Heart left ventricle (tissue), 16 donors: ENCODE measurements at regions of chr4 and their contacts with region 1.

Region 1: DNA sequence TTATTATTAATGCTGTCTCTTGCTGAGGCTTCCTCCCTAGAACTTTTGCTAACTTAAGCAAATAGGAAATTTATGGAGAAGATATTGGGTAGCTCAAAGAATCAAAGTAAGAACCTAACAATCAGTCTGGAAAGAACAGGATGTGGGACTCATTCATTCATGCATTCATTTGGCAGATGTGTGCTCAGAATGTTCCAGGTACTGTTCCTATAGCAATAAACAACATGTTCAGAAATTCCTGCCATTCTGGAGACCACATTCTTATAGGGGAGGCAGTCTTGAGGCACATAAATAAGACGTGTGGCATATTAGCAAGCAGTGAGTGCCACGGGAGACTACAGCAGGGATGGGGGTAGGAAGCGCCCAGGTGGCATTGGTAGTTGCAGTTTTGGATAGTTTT is 5.0 kb downstream of the GRK4 start:
- DNase-seq: no peak
- ATAC-seq: no peak
- H3K4me3 ChIP-seq: no peak overlapping the region
- H3K27ac ChIP-seq: no peak overlapping the region
- H3K4me1 ChIP-seq: peaks cover 0 to 14% (median 8%) of the 10 kb centered on the region in 12 donors
- H3K27me3 ChIP-seq: no peaks in the 10 kb centered on the region
- CTCF ChIP-seq: no peak
- POLR2A ChIP-seq: no peak

Region 2: DNA sequence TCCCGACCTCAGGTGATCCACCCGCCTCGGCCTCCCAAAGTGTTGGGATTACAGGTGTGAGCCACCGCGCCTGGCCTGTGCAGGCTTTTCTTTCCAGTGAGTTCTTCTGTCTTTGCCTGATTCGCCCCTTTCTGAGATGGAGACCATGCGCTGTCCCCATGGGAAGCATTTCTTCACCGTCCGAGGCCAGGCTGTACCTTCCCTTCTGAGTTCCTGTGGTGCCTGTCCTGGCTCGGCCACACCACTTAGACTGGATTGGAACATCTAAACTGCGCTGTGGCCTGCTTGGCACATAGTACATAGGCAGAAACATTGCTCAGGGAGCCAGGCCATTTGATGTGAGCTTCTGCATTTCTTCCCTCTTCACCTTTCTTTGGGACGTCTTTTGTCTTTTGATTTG is 408.2 kb before region 1 on chr4:
- intact Hi-C with region 1: no loop called
- DNase-seq: no peak
- ATAC-seq: peak in 2 of 4 donors; percentile 29 to 35
- H3K4me3 ChIP-seq: no peak overlapping the region
- H3K27ac ChIP-seq: no peak overlapping the region
- H3K4me1 ChIP-seq: peaks cover 0 to 36% (median 7%) of the 10 kb centered on the region in 12 donors
- H3K27me3 ChIP-seq: no peaks in the 10 kb centered on the region
- CTCF ChIP-seq: no peak
- POLR2A ChIP-seq: no peak

Region 3: GRCh38 chr4:3031357-3032082 is 63.1 kb after region 1 on chr4:
- intact Hi-C with region 1: loop called in 4 of 10 experiments (anchors 5 kb)
- DNase-seq: peak in 1 of 5 donors; percentile 48
- ATAC-seq: peak in 2 of 4 donors; percentile 32 to 33
- H3K4me3 ChIP-seq: no peak overlapping the region
- H3K27ac ChIP-seq: no peak overlapping the region
- H3K4me1 ChIP-seq: no peaks in the 10 kb centered on the region
- H3K27me3 ChIP-seq: no peaks in the 10 kb centered on the region
- CTCF ChIP-seq: no peak
- POLR2A ChIP-seq: no peak

Region 4: DNA sequence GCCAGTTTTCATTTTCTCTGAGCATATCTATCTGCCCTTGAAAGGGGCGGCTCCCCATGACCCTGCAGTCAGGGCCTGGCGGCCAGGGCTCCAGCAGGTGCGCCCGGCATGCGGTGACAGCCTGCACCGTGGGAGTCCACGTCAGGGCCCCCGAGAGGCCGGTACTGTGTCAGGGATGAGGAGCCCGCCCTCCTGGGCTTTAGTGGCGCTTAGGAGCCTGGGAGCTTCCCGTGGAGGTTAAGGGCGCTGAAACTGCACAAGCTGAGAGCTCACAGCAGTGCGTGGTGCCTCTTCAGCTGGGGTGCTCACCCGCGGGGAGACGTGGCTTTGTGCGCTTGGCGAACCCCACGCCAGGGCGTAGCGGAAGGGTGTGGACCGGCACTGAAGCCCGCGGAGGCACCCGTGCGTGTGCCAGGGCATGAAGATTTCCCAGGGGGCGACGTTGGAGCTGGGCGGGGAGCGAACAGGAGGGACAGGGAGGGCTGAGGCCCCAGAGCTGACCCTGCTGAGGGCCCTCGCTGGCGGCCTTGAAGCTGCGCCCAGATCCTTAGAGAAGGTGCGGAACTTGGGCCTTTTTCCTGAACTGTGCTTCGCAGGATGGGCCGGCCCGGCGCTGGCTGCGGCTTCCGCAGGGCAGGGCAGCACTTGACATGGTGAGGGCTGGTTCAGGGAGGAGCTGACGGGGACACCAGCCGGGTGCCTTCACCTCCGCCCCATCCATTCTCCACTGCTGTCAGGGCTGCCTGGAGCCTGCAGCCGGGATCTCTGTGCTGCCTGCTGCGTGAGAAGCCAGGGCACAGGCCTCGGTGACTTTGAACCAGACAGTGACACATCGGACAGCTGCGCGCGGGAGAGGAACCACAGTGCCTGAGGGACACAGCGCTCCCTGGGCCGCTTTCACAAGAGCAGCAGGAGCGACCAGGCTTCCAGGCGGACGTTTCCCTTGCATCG is 73.1 kb after region 1 on chr4:
- intact Hi-C with region 1: loop called in 3 of 10 experiments (anchors 5 kb)
- DNase-seq: peak; percentile 48 to 81 (median 67)
- ATAC-seq: peak; percentile 23 to 79 (median 58)
- H3K4me3 ChIP-seq: peak overlapping the region; percentile 19 to 63 (median 56)
- H3K27ac ChIP-seq: peak overlapping the region; percentile 36 to 88 (median 70)
- H3K4me1 ChIP-seq: peaks cover 0 to 62% (median 25%) of the 10 kb centered on the region in 12 donors
- H3K27me3 ChIP-seq: no peaks in the 10 kb centered on the region
- CTCF ChIP-seq: no peak
- POLR2A ChIP-seq: no peak